Body of pancreas (tissue), 4 donors: ENCODE measurements at regions of chr7 and their contacts with region 1.

Region 1: DNA sequence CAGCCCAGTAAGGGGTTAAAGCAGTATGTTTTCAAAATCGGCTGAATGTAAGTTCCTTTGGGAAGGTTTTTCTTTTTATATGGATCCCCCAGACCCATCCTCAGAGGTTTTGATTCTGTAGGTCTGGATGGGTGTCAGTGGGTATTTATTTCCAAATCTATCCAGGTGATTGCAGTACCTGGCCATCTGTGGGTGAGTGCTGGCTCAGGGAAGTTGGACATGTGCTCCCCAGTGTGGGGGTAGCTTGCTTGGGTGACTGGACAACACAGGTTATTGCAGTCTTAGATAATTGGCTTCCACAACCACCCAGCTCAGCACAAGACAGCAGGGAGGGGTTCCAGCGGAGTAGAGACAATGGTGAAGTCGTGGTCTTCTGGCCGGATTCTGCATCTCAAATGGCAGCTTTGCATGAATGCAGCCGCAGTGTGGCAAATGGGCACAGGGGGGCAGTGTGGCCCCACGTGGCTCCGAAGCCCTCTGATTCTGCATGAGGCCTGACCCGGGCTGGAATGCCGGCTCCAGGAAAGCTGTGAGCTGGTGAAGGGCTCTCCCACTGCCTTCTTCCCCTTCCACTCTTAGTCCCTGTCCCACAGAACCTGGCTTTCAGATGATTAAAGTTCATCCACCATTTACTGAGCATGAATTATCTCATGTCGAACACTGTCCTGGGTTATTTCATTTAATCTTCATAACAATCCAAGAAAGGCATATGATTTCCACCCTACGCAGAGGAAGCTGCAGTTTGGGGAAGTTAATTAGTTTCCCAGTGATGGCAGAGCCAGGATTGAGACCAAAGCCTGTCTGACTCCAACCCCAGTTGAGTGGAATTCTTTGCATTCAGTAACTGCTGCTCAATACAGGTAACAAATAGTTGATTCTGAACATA is 64.5 kb upstream of the SYPL1 start:
- DNase-seq: peak; percentile 82 to 88 (median 86)
- ATAC-seq: peak; percentile 90
- H3K4me3 ChIP-seq: no peak overlapping the region
- H3K27ac ChIP-seq: peak overlapping the region in 2 of 4 donors; percentile 41 to 61
- H3K4me1 ChIP-seq: peaks cover 22% of the 10 kb centered on the region
- H3K27me3 ChIP-seq: no peaks in the 10 kb centered on the region
- CTCF ChIP-seq: peak; percentile 94 to 99 (median 98)
- POLR2A ChIP-seq: no peak

Region 2: GRCh38 chr7:106461993-106462859 is 285.6 kb after region 1 on chr7:
- intact Hi-C with region 1: loop called (anchors 5 kb)
- DNase-seq: no peak
- ATAC-seq: peak; percentile 56
- H3K4me3 ChIP-seq: no peak overlapping the region
- H3K27ac ChIP-seq: peak overlapping the region in 2 of 4 donors; percentile 6 to 51
- H3K4me1 ChIP-seq: peaks cover 13% of the 10 kb centered on the region
- H3K27me3 ChIP-seq: no peaks in the 10 kb centered on the region
- CTCF ChIP-seq: peak; percentile 14 to 76 (median 73)
- POLR2A ChIP-seq: no peak